ENCODE measurements at regions of chr5 and their contacts with region 1.

Region 1: GRCh38 chr5:96752341-96753016 is 55.3 kb downstream of the ERAP1 start:
- DNase-seq: peak in 3 of 5 donors; percentile 29 to 61 (median 45)
- H3K4me3 ChIP-seq: no peak overlapping the region
- H3K4me3 Mint-ChIP-seq: no peak overlapping the region
- H3K27ac ChIP-seq: no peak overlapping the region
- H3K27ac Mint-ChIP-seq: peak overlapping the region in 3 of 8 donors; percentile 6 to 80 (median 15)
- H3K4me1 ChIP-seq: no peaks in the 10 kb centered on the region
- H3K4me1 Mint-ChIP-seq: peaks cover 0 to 5% (median 4%) of the 10 kb centered on the region in 3 donors
- H3K27me3 ChIP-seq: no peaks in the 10 kb centered on the region
- H3K27me3 Mint-ChIP-seq: no peaks in the 10 kb centered on the region

Region 2: GRCh38 chr5:96415897-96416296 is 336.6 kb before region 1 on chr5:
- CTCF ChIA-PET with region 1: no interaction called
- POLR2A ChIA-PET with region 1: no interaction called
- DNase-seq: no peak
- H3K4me3 ChIP-seq: no peak overlapping the region
- H3K4me3 Mint-ChIP-seq: no peak overlapping the region
- H3K27ac ChIP-seq: no peak overlapping the region
- H3K27ac Mint-ChIP-seq: no peak overlapping the region
- H3K4me1 ChIP-seq: no peaks in the 10 kb centered on the region
- H3K4me1 Mint-ChIP-seq: no peaks in the 10 kb centered on the region
- H3K27me3 ChIP-seq: no peaks in the 10 kb centered on the region
- H3K27me3 Mint-ChIP-seq: peaks cover 2 to 38% of the 10 kb centered on the region in 2 donors

Region 3: GRCh38 chr5:96483878-96484277 is 268.6 kb before region 1 on chr5:
- CTCF ChIA-PET with region 1: no interaction called
- POLR2A ChIA-PET with region 1: no interaction called
- DNase-seq: no peak
- H3K4me3 ChIP-seq: no peak overlapping the region
- H3K4me3 Mint-ChIP-seq: no peak overlapping the region
- H3K27ac ChIP-seq: no peak overlapping the region
- H3K27ac Mint-ChIP-seq: no peak overlapping the region
- H3K4me1 ChIP-seq: no peaks in the 10 kb centered on the region
- H3K4me1 Mint-ChIP-seq: no peaks in the 10 kb centered on the region
- H3K27me3 ChIP-seq: no peaks in the 10 kb centered on the region
- H3K27me3 Mint-ChIP-seq: peaks cover 4 to 18% of the 10 kb centered on the region in 2 donors

Region 4: DNA sequence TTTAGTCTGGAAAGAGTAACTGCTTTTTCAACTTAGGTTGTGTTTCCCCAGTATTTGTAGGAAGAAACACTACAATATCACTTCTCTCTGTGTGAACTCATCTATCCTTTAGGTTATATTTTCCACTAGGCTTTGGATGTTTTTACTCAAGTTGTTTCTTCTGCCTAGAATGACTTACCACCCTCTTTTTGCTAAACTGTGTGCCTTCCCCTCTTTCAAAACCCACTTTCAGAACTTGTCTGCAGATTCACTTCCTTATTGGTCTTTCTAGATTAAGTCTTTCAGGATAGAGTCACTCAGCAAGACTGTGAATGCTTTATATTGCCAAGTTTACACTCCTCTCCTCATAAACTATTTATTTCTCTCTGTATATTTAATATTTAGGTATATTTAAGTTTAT is 104.5 kb before region 1 on chr5:
- CTCF ChIA-PET with region 1: no interaction called
- POLR2A ChIA-PET with region 1: no interaction called
- DNase-seq: no peak
- H3K4me3 ChIP-seq: no peak overlapping the region
- H3K4me3 Mint-ChIP-seq: no peak overlapping the region
- H3K27ac ChIP-seq: no peak overlapping the region
- H3K27ac Mint-ChIP-seq: no peak overlapping the region
- H3K4me1 ChIP-seq: no peaks in the 10 kb centered on the region
- H3K4me1 Mint-ChIP-seq: peaks cover 0 to 6% (median 0%) of the 10 kb centered on the region in 3 donors
- H3K27me3 ChIP-seq: no peaks in the 10 kb centered on the region
- H3K27me3 Mint-ChIP-seq: peaks cover 0 to 7% of the 10 kb centered on the region in 2 donors

Region 5: GRCh38 chr5:96816411-96816939 is 64.0 kb after region 1 on chr5:
- CTCF ChIA-PET with region 1: interaction called, 6 read pairs
- POLR2A ChIA-PET with region 1: interaction called, 10 read pairs
- DNase-seq: peak; percentile 45 to 88 (median 77)
- H3K4me3 ChIP-seq: peak overlapping the region; percentile 59
- H3K4me3 Mint-ChIP-seq: peak overlapping the region; percentile 78 to 93 (median 88)
- H3K27ac ChIP-seq: peak overlapping the region; percentile 56
- H3K27ac Mint-ChIP-seq: peak overlapping the region; percentile 76 to 99 (median 92)
- H3K4me1 ChIP-seq: peaks cover 56% of the 10 kb centered on the region
- H3K4me1 Mint-ChIP-seq: peaks cover 53 to 68% (median 64%) of the 10 kb centered on the region in 3 donors
- H3K27me3 ChIP-seq: no peaks in the 10 kb centered on the region
- H3K27me3 Mint-ChIP-seq: no peaks in the 10 kb centered on the region

Region 6: DNA sequence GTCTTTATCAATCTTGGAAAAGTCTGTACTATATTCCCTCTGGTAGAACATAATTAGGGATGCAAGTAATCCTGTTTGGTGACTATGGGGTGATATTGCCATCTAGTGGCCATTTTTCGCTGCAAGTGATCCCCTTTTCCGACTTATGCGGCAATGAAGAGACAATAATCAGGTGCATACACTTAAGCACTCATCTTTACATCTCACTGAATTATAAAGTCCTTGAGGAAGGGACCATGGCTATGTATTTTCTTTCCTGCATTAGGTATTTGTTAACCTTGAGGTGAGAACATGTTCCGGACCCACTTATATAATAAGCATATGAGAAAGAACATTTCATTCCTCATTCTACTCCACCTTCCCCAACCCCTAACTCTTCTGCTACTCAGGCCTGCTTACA is 409.6 kb after region 1 on chr5:
- CTCF ChIA-PET with region 1: interaction called, 49 read pairs
- POLR2A ChIA-PET with region 1: interaction called, 3 read pairs
- DNase-seq: peak; percentile 12 to 62 (median 46)
- H3K4me3 ChIP-seq: no peak overlapping the region
- H3K4me3 Mint-ChIP-seq: no peak overlapping the region
- H3K27ac ChIP-seq: no peak overlapping the region
- H3K27ac Mint-ChIP-seq: peak overlapping the region in 2 of 8 donors; percentile 31 to 71
- H3K4me1 ChIP-seq: no peaks in the 10 kb centered on the region
- H3K4me1 Mint-ChIP-seq: peaks cover 3 to 10% (median 8%) of the 10 kb centered on the region in 3 donors
- H3K27me3 ChIP-seq: no peaks in the 10 kb centered on the region
- H3K27me3 Mint-ChIP-seq: peaks cover 5% of the 10 kb centered on the region in 2 donors